ENCODE measurements at regions of chr14 and their contacts with region 1.

Region 1: GRCh38 chr14:38867561-38868150 is 235.4 kb downstream of the SEC23A start:
- DNase-seq: peak; percentile 14 to 38
- ATAC-seq: peak; percentile 54 to 71
- H3K4me3 ChIP-seq: no peak overlapping the region
- H3K27ac ChIP-seq: no peak overlapping the region
- H3K4me1 ChIP-seq: peaks cover 8 to 11% of the 10 kb centered on the region in 2 donors
- H3K27me3 ChIP-seq: no peaks in the 10 kb centered on the region
- CTCF ChIP-seq: peak in 4 of 5 experiments; percentile 48 to 77 (median 64)
- POLR2A ChIP-seq: no peak

Region 2: GRCh38 chr14:37890095-37890494 is 977.6 kb before region 1 on chr14:
- in situ Hi-C with region 1: loop called in 1 of 4 experiments (anchors 10 kb)
- intact Hi-C with region 1: no loop called
- DNase-seq: no peak
- ATAC-seq: no peak
- H3K4me3 ChIP-seq: no peak overlapping the region
- H3K27ac ChIP-seq: no peak overlapping the region
- H3K4me1 ChIP-seq: no peaks in the 10 kb centered on the region
- H3K27me3 ChIP-seq: no peaks in the 10 kb centered on the region
- CTCF ChIP-seq: no peak
- POLR2A ChIP-seq: no peak

Region 3: GRCh38 chr14:37903343-37904191 is 964.1 kb before region 1 on chr14:
- in situ Hi-C with region 1: loop called (anchors 10 to 25 kb)
- intact Hi-C with region 1: loop called (anchors 2 kb)
- DNase-seq: no peak
- ATAC-seq: no peak
- H3K4me3 ChIP-seq: no peak overlapping the region
- H3K27ac ChIP-seq: no peak overlapping the region
- H3K4me1 ChIP-seq: no peaks in the 10 kb centered on the region
- H3K27me3 ChIP-seq: peaks cover 0 to 3% (median 0%) of the 10 kb centered on the region in 3 donors
- CTCF ChIP-seq: peak in 4 of 5 experiments; percentile 29 to 46 (median 40)
- POLR2A ChIP-seq: no peak

Region 4: DNA sequence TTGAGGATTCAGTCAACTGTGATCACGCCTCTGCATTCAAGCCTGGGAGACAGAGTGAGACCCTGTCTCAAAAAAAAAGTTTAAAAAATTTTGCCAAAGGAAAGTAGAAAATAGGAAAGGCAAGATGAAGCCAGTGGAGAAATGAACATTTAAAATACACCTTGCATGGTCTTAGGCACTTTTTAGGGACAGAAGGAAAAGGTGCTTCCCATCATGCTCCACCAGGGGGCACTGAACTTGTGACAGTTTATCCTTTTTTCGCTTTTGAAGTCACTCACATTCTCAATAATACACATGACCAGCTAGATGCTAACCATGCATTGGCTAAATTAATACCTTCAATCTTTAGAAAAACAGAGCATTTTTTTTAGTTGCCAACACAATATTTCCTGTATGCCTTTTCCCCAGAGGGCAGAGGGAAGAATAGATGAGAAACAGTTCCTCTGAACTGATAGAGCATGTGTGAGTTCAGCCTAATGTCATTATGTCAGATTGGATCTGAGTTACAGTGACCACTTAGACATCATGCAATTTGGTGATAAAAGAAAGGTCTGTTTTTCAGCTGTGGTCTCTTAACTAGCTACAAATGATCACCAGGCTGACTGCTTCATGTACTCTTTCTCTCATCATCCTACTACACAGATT is 881.7 kb before region 1 on chr14:
- in situ Hi-C with region 1: no loop called
- intact Hi-C with region 1: loop called (anchors 10 kb)
- DNase-seq: no peak
- ATAC-seq: no peak
- H3K4me3 ChIP-seq: no peak overlapping the region
- H3K27ac ChIP-seq: no peak overlapping the region
- H3K4me1 ChIP-seq: no peaks in the 10 kb centered on the region
- H3K27me3 ChIP-seq: no peaks in the 10 kb centered on the region
- CTCF ChIP-seq: peak in 4 of 5 experiments; percentile 29 to 48 (median 37)
- POLR2A ChIP-seq: no peak

Region 5: DNA sequence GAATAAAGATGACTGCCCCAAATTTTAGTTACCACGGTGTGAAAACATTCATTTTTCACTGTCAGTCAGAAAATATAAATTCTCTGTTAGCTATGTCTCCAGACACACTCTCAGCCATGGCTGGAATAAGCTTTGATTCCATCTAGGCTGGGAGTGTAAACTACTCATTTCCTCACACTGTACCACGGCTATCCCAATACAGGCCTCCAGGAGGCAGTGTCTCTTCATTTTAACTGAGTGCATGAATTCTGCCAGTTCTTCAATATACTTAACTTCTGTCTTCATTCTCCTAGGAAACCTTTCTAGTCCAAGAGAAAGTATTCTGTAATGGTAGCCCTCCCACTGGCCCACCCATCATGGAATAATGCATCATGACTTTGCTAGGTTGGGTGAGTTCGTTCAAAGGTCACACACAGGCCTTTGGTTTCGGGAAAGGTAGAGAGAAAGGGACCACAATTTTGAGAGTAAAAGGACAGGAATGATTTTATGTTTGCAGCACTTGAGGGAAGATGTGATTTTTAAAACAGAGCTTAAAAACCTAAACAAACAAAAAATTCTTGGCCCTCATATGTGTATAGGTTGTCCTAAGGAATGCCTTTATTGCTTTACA is 145.7 kb before region 1 on chr14:
- in situ Hi-C with region 1: loop called in 3 of 4 experiments (anchors 5 to 25 kb)
- intact Hi-C with region 1: loop called (anchors 1 kb)
- DNase-seq: peak in 1 of 2 donors; percentile 12
- ATAC-seq: no peak
- H3K4me3 ChIP-seq: no peak overlapping the region
- H3K27ac ChIP-seq: no peak overlapping the region
- H3K4me1 ChIP-seq: peaks cover 4 to 5% of the 10 kb centered on the region in 2 donors
- H3K27me3 ChIP-seq: no peaks in the 10 kb centered on the region
- CTCF ChIP-seq: peak; percentile 35 to 62 (median 49)
- POLR2A ChIP-seq: no peak

Region 6: GRCh38 chr14:38808734-38809462 is 58.8 kb before region 1 on chr14:
- in situ Hi-C with region 1: no loop called
- intact Hi-C with region 1: no loop called
- DNase-seq: no peak
- ATAC-seq: no peak
- H3K4me3 ChIP-seq: no peak overlapping the region
- H3K27ac ChIP-seq: no peak overlapping the region
- H3K4me1 ChIP-seq: no peaks in the 10 kb centered on the region
- H3K27me3 ChIP-seq: no peaks in the 10 kb centered on the region
- CTCF ChIP-seq: no peak
- POLR2A ChIP-seq: no peak